CD4-positive, alpha-beta T cell (primary cell): ENCODE measurements at regions of chr1 and their contacts with region 1.

Region 1: DNA sequence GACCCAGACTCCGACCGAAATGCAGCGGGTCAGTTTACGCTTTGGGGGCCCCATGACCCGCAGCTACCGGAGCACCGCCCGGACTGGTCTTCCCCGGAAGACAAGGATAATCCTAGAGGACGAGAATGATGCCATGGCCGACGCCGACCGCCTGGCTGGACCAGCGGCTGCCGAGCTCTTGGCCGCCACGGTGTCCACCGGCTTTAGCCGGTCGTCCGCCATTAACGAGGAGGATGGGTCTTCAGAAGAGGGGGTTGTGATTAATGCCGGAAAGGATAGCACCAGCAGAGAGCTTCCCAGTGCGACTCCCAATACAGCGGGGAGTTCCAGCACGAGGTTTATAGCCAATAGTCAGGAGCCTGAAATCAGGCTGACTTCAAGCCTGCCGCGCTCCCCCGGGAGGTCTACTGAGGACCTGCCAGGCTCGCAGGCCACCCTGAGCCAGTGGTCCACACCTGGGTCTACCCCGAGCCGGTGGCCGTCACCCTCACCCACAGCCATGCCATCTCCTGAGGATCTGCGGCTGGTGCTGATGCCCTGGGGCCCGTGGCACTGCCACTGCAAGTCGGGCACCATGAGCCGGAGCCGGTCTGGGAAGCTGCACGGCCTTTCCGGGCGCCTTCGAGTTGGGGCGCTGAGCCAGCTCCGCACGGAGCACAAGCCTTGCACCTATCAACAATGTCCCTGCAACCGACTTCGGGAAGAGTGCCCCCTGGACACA is 534 bp downstream of the C1orf56 start:
- DNase-seq: peak; percentile 28 to 84 (median 51)
- ATAC-seq: peak; percentile 77
- H3K4me3 ChIP-seq: peak overlapping the region; percentile 84
- H3K4me3 Mint-ChIP-seq: peak overlapping the region; percentile 93
- H3K27ac ChIP-seq: peak overlapping the region; percentile 65 to 73
- H3K27ac Mint-ChIP-seq: peak overlapping the region; percentile 90
- H3K4me1 ChIP-seq: peaks cover 55% of the 10 kb centered on the region
- H3K4me1 Mint-ChIP-seq: peaks cover 78% of the 10 kb centered on the region
- H3K27me3 ChIP-seq: no peaks in the 10 kb centered on the region
- H3K27me3 Mint-ChIP-seq: no peaks in the 10 kb centered on the region
- CTCF ChIP-seq: peak; percentile 52

Region 2: GRCh38 chr1:150820710-150821512 is 227.2 kb before region 1 on chr1:
- CTCF ChIA-PET with region 1: no interaction called
- POLR2A ChIA-PET with region 1: no interaction called
- intact Hi-C with region 1: no loop called
- DNase-seq: no peak
- ATAC-seq: no peak
- H3K4me3 ChIP-seq: no peak overlapping the region
- H3K4me3 Mint-ChIP-seq: no peak overlapping the region
- H3K27ac ChIP-seq: no peak overlapping the region
- H3K27ac Mint-ChIP-seq: peak overlapping the region; percentile 44
- H3K4me1 ChIP-seq: no peaks in the 10 kb centered on the region
- H3K4me1 Mint-ChIP-seq: no peaks in the 10 kb centered on the region
- H3K27me3 ChIP-seq: no peaks in the 10 kb centered on the region
- H3K27me3 Mint-ChIP-seq: no peaks in the 10 kb centered on the region
- CTCF ChIP-seq: no peak

Region 3: GRCh38 chr1:151036363-151036762 is 11.7 kb before region 1 on chr1 and contains the start of gene BNIPL:
- CTCF ChIA-PET with region 1: no interaction called
- POLR2A ChIA-PET with region 1: interaction called, 13 read pairs
- intact Hi-C with region 1: no loop called
- DNase-seq: no peak
- ATAC-seq: no peak
- H3K4me3 ChIP-seq: no peak within 1 kb of the TSS
- H3K4me3 Mint-ChIP-seq: no peak within 1 kb of the TSS
- H3K27ac ChIP-seq: no peak within 1 kb of the TSS
- H3K27ac Mint-ChIP-seq: peak within 1 kb of the TSS; percentile 52
- H3K4me1 ChIP-seq: no peaks in the 10 kb centered on the region
- H3K4me1 Mint-ChIP-seq: peaks cover 9% of the 10 kb centered on the region
- H3K27me3 ChIP-seq: no peaks in the 10 kb centered on the region
- H3K27me3 Mint-ChIP-seq: no peaks in the 10 kb centered on the region
- CTCF ChIP-seq: no peak
- total RNA-seq, gene BNIPL: 0.30 to 0.42 TPM

Region 4: DNA sequence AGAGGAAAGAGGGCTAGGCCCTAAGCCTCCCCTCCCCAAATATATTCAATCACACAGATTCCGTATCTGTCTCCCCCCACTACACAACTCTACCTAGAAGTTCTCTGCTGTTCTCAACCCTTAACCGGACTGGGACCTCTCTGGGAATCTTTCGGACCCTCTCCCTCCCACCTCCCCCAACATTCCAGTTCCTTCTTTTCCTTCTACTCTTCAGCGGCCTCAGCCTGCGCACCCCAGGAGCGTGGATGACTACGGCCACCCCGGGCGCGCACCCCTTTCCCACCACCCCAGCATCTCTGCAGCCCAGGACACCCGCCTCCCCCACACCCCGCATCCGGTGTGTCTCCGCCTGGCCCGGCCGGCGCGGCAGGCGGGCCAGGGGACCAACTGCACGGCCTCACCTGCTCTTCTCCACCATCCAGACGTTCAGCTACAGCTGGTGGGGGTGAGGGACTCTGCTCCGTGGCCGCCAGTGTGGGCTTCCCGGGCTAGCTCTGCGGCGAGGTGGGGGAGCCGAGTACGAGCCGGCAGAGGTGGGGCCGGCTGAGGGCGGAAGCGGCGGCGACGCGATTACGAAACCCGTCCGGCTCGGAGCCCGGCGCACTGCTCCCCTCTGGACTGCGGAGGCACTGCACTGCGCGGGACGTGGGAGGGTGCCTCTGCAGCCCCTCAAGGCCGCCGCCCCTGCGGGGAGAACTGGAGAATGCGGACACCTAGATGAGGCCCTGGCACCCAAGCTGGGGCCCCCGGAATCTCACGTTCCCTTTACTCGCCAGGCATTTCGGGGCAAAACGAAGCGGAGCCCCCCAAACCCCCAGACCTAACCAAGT is 11.2 kb after region 1 on chr1 and contains the start of gene CDC42SE1:
- CTCF ChIA-PET with region 1: interaction called, 58 read pairs
- POLR2A ChIA-PET with region 1: interaction called, 144 read pairs
- intact Hi-C with region 1: loop called in 1 of 2 experiments (anchors 1 kb)
- DNase-seq: peak; percentile 71 to 94 (median 80)
- ATAC-seq: peak; percentile 76
- H3K4me3 ChIP-seq: peak within 1 kb of the TSS; percentile 64
- H3K4me3 Mint-ChIP-seq: peak within 1 kb of the TSS; percentile 97
- H3K27ac ChIP-seq: peak within 1 kb of the TSS; percentile 88 to 93
- H3K27ac Mint-ChIP-seq: peak within 1 kb of the TSS; percentile 90
- H3K4me1 ChIP-seq: peaks cover 42% of the 10 kb centered on the region
- H3K4me1 Mint-ChIP-seq: peaks cover 56% of the 10 kb centered on the region
- H3K27me3 ChIP-seq: no peaks in the 10 kb centered on the region
- H3K27me3 Mint-ChIP-seq: no peaks in the 10 kb centered on the region
- CTCF ChIP-seq: peak; percentile 81
- total RNA-seq, gene CDC42SE1: 401 to 404 TPM

Region 5: GRCh38 chr1:151113877-151114276 is 65.8 kb after region 1 on chr1:
- CTCF ChIA-PET with region 1: no interaction called
- POLR2A ChIA-PET with region 1: no interaction called
- intact Hi-C with region 1: no loop called
- DNase-seq: no peak
- ATAC-seq: no peak
- H3K4me3 ChIP-seq: no peak overlapping the region
- H3K4me3 Mint-ChIP-seq: no peak overlapping the region
- H3K27ac ChIP-seq: no peak overlapping the region
- H3K27ac Mint-ChIP-seq: no peak overlapping the region
- H3K4me1 ChIP-seq: no peaks in the 10 kb centered on the region
- H3K4me1 Mint-ChIP-seq: no peaks in the 10 kb centered on the region
- H3K27me3 ChIP-seq: no peaks in the 10 kb centered on the region
- H3K27me3 Mint-ChIP-seq: no peaks in the 10 kb centered on the region
- CTCF ChIP-seq: no peak

Region 6: DNA sequence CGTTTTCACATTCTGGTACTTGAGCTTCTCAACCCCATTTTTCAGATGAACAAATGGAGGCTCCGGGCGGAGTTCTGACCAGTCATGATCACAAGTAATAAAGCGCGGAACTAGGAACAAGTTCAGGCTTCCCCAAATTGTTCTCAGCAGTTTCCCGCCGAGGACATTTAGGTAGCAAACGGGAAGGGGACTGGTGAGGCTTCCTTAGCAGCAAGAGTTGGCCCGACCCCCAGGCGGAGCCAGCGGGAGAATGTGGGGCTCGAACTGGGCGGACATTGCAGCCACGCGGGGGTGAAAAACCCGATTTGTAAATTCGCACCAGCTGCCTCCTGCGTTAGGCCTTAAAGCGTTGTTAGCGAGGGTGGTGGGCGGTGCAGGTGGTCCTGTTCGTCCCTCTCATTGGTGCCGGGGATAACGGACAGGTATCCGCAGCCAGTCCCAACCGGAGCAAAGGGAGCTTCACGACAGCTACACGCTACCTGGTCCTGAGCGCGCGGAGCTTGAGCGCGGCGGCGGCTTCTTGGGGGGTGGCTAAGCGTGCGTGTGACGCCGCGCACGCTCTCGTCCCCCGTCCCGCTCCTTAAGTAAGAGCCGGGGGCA is 83.0 kb after region 1 on chr1:
- CTCF ChIA-PET with region 1: no interaction called
- POLR2A ChIA-PET with region 1: no interaction called
- intact Hi-C with region 1: no loop called
- DNase-seq: peak; percentile 58 to 88 (median 76)
- ATAC-seq: peak; percentile 100
- H3K4me3 ChIP-seq: peak overlapping the region; percentile 48
- H3K4me3 Mint-ChIP-seq: peak overlapping the region; percentile 86
- H3K27ac ChIP-seq: peak overlapping the region in 1 of 2 donors; percentile 10
- H3K27ac Mint-ChIP-seq: peak overlapping the region; percentile 88
- H3K4me1 ChIP-seq: peaks cover 16% of the 10 kb centered on the region
- H3K4me1 Mint-ChIP-seq: peaks cover 15% of the 10 kb centered on the region
- H3K27me3 ChIP-seq: peaks cover 0 to 9% of the 10 kb centered on the region in 2 experiments
- H3K27me3 Mint-ChIP-seq: no peaks in the 10 kb centered on the region
- CTCF ChIP-seq: no peak

Region 7: DNA sequence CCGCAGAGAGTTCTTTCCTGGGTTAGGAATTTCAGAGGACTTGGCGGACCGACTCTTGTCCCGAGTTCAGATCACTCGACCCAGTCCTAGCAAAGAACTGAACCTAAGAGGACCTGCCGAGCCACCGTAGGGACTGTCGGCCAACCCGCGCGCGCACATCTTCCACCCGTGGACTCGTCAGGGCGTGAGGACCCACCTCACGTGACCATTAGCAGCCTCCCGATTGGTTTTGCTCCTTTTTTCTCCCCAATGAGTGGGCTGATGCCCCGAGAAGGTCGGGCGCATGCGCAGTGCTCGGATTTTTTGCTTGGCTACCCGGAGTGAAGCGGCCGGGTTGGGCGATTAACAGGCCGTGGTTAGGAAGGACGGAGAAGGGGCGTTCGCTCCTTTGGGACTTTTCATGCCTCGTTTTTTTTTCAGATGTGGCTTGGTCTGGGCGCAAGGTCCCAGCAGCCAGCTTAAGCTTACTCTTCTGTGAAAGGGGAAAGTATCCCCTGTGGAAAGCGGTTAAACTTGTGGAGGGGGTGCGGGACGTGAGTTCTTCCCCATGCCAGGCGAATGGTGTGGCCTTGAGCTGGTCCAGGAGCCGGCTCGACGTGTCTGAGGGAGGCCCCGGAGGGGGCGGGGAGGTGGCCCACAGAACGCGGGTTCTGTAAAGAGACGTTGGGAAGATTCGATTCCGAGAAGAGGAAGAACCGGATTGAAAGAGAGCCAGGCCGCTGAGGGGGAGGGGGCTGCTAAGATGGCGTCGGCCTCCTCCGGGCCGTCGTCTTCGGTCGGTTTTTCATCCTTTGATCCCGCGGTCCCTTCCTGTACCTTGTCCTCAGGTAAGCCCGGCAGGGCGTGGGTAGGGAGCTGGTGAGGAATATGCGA is 150.4 kb after region 1 on chr1 and contains the start of gene PIP5K1A:
- CTCF ChIA-PET with region 1: no interaction called
- POLR2A ChIA-PET with region 1: no interaction called
- intact Hi-C with region 1: no loop called
- DNase-seq: peak; percentile 96 to 99 (median 99)
- ATAC-seq: peak; percentile 95
- H3K4me3 ChIP-seq: peak within 1 kb of the TSS; percentile 93
- H3K4me3 Mint-ChIP-seq: peak within 1 kb of the TSS; percentile 98
- H3K27ac ChIP-seq: peak within 1 kb of the TSS; percentile 69 to 77
- H3K27ac Mint-ChIP-seq: peak within 1 kb of the TSS; percentile 96
- H3K4me1 ChIP-seq: peaks cover 43% of the 10 kb centered on the region
- H3K4me1 Mint-ChIP-seq: peaks cover 48% of the 10 kb centered on the region
- H3K27me3 ChIP-seq: no peaks in the 10 kb centered on the region
- H3K27me3 Mint-ChIP-seq: peaks cover 4% of the 10 kb centered on the region
- CTCF ChIP-seq: no peak
- total RNA-seq, gene PIP5K1A: 41.7 to 44.7 TPM